ENCODE measurements at regions of chr9 and their contacts with region 1.

Region 1: GRCh38 chr9:5832543-5833529 is at the start of gene ERMP1:
- DNase-seq: peak; percentile 93
- H3K4me3 ChIP-seq: peak within 1 kb of the TSS; percentile 77 to 97 (median 88)
- H3K27ac ChIP-seq: peak within 1 kb of the TSS; percentile 76 to 82 (median 80)
- H3K4me1 ChIP-seq: peaks cover 0 to 25% (median 16%) of the 10 kb centered on the region in 4 donors
- H3K27me3 ChIP-seq: no peaks in the 10 kb centered on the region
- CTCF ChIP-seq: peak; percentile 75 to 87 (median 84)
- EP300 ChIP-seq: no peak
- POLR2A ChIP-seq: no peak
- total RNA-seq, gene ERMP1: 7.9 to 12.2 (median 8.6) TPM

Region 2: DNA sequence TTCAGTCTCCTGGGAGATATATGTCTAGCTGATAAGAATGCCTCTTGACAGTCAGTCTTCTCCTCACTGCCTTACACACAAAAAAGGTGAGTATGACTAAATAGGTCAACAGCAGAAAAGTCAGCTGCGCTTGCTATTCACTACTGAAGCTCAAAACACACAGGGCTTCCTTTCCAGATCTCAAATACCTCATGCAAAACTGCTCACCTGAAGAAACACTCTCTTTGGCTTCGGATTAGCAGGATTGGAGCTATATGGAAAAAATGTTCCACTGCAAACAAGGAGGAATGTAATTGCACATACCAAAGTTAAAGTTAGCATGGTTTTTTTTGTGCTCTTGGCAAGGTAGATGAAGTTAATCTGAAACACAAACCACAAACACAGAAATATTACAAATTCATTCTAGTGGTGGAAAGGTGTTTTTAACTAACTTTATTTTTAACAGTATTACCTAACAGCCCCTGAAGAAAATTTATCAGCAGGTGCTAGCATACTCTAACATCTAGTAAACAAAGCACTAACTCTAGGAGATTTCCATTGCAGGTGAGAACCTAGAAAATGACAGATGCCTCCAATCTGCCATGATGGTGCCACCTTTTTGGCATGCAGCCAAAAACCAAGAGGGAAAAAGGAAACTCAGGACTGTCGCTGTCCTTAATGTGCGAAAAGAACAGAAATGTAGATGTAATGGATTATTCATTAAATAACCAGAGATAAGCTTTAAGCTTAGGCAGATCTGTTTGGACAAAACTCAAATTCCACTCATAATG is 31.7 kb before region 1 on chr9:
- intact Hi-C with region 1: loop called (anchors 2 kb)
- DNase-seq: no peak
- H3K4me3 ChIP-seq: no peak overlapping the region
- H3K27ac ChIP-seq: no peak overlapping the region
- H3K4me1 ChIP-seq: peaks cover 0 to 20% (median 7%) of the 10 kb centered on the region in 4 donors
- H3K27me3 ChIP-seq: no peaks in the 10 kb centered on the region
- CTCF ChIP-seq: no peak
- EP300 ChIP-seq: no peak
- POLR2A ChIP-seq: no peak

Region 3: GRCh38 chr9:5851445-5851844 is 18.6 kb after region 1 on chr9:
- intact Hi-C with region 1: no loop called
- DNase-seq: no peak
- H3K4me3 ChIP-seq: no peak overlapping the region
- H3K27ac ChIP-seq: no peak overlapping the region
- H3K4me1 ChIP-seq: no peaks in the 10 kb centered on the region
- H3K27me3 ChIP-seq: no peaks in the 10 kb centered on the region
- CTCF ChIP-seq: no peak
- EP300 ChIP-seq: no peak
- POLR2A ChIP-seq: no peak